T-cell (primary cell): ENCODE measurements at regions of chr16 and their contacts with region 1.

Region 1: GRCh38 chr16:89217388-89218191 is at the start of gene ZNF778:
- DNase-seq: peak; percentile 60 to 90 (median 76)
- ATAC-seq: peak; percentile 83 to 87 (median 86)
- H3K4me3 ChIP-seq: peak within 1 kb of the TSS; percentile 76 to 85
- H3K4me3 Mint-ChIP-seq: peak within 1 kb of the TSS; percentile 74 to 90 (median 88)
- H3K27ac ChIP-seq: peak within 1 kb of the TSS; percentile 88
- H3K27ac Mint-ChIP-seq: peak within 1 kb of the TSS; percentile 87 to 94
- H3K4me1 ChIP-seq: peaks cover 13 to 20% of the 10 kb centered on the region in 2 experiments
- H3K4me1 Mint-ChIP-seq: peaks cover 22 to 36% (median 26%) of the 10 kb centered on the region in 3 donors
- H3K27me3 ChIP-seq: no peaks in the 10 kb centered on the region
- H3K27me3 Mint-ChIP-seq: no peaks in the 10 kb centered on the region
- total RNA-seq, gene ZNF778: 6.0 to 16.3 (median 13.6) TPM

Region 2: GRCh38 chr16:88848557-88848956 is 369.0 kb before region 1 on chr16:
- CTCF ChIA-PET with region 1: no interaction called
- POLR2A ChIA-PET with region 1: no interaction called
- DNase-seq: no peak
- ATAC-seq: no peak
- H3K4me3 ChIP-seq: no peak overlapping the region
- H3K4me3 Mint-ChIP-seq: no peak overlapping the region
- H3K27ac ChIP-seq: no peak overlapping the region
- H3K27ac Mint-ChIP-seq: no peak overlapping the region
- H3K4me1 ChIP-seq: no peaks in the 10 kb centered on the region
- H3K4me1 Mint-ChIP-seq: peaks cover 2 to 5% (median 5%) of the 10 kb centered on the region in 3 donors
- H3K27me3 ChIP-seq: no peaks in the 10 kb centered on the region
- H3K27me3 Mint-ChIP-seq: no peaks in the 10 kb centered on the region

Region 3: GRCh38 chr16:89230255-89230654 is 12.7 kb after region 1 on chr16:
- CTCF ChIA-PET with region 1: no interaction called
- POLR2A ChIA-PET with region 1: no interaction called
- DNase-seq: no peak
- ATAC-seq: no peak
- H3K4me3 ChIP-seq: no peak overlapping the region
- H3K4me3 Mint-ChIP-seq: no peak overlapping the region
- H3K27ac ChIP-seq: no peak overlapping the region
- H3K27ac Mint-ChIP-seq: no peak overlapping the region
- H3K4me1 ChIP-seq: no peaks in the 10 kb centered on the region
- H3K4me1 Mint-ChIP-seq: no peaks in the 10 kb centered on the region
- H3K27me3 ChIP-seq: no peaks in the 10 kb centered on the region
- H3K27me3 Mint-ChIP-seq: no peaks in the 10 kb centered on the region

Region 4: GRCh38 chr16:89842471-89843408 is 625.1 kb after region 1 on chr16:
- CTCF ChIA-PET with region 1: no interaction called
- POLR2A ChIA-PET with region 1: interaction called in 1 of 2 experiments, 12 read pairs
- DNase-seq: no peak
- ATAC-seq: no peak
- H3K4me3 ChIP-seq: no peak overlapping the region
- H3K4me3 Mint-ChIP-seq: no peak overlapping the region
- H3K27ac ChIP-seq: no peak overlapping the region
- H3K27ac Mint-ChIP-seq: no peak overlapping the region
- H3K4me1 ChIP-seq: peaks cover 2 to 44% of the 10 kb centered on the region in 2 experiments
- H3K4me1 Mint-ChIP-seq: peaks cover 20 to 34% (median 24%) of the 10 kb centered on the region in 3 donors
- H3K27me3 ChIP-seq: peaks cover 0 to 10% of the 10 kb centered on the region in 2 experiments
- H3K27me3 Mint-ChIP-seq: no peaks in the 10 kb centered on the region